Mammary epithelial cell (primary cell): ENCODE measurements at regions of chr12 and their contacts with region 1.

Region 1: GRCh38 chr12:131988054-131988796 is 38.5 kb downstream of the EP400 start:
- DNase-seq: no peak
- H3K4me3 ChIP-seq: no peak overlapping the region
- H3K27ac ChIP-seq: no peak overlapping the region
- H3K4me1 ChIP-seq: no peaks in the 10 kb centered on the region
- H3K27me3 ChIP-seq: no peaks in the 10 kb centered on the region
- CTCF ChIP-seq: no peak

Region 2: GRCh38 chr12:131710464-131711457 is 277.5 kb before region 1 on chr12 and contains the start of gene SFSWAP:
- CTCF ChIA-PET with region 1: no interaction called
- dilution Hi-C with region 1: no loop called
- in situ Hi-C with region 1: no loop called
- intact Hi-C with region 1: no loop called
- DNase-seq: peak; percentile 80
- H3K4me3 ChIP-seq: peak within 1 kb of the TSS; percentile 61 to 97 (median 81)
- H3K27ac ChIP-seq: peak within 1 kb of the TSS; percentile 98
- H3K4me1 ChIP-seq: peaks cover 15% of the 10 kb centered on the region
- H3K27me3 ChIP-seq: no peaks in the 10 kb centered on the region
- CTCF ChIP-seq: no peak
- total RNA-seq, gene SFSWAP: 19.8 to 41.6 TPM

Region 3: GRCh38 chr12:131872185-131873051 is 115.8 kb before region 1 on chr12:
- CTCF ChIA-PET with region 1: no interaction called
- dilution Hi-C with region 1: loop called (anchors 5 kb)
- in situ Hi-C with region 1: no loop called
- intact Hi-C with region 1: no loop called
- DNase-seq: peak; percentile 94
- H3K4me3 ChIP-seq: no peak overlapping the region
- H3K27ac ChIP-seq: no peak overlapping the region
- H3K4me1 ChIP-seq: peaks cover 19% of the 10 kb centered on the region
- H3K27me3 ChIP-seq: no peaks in the 10 kb centered on the region
- CTCF ChIP-seq: no peak

Region 4: DNA sequence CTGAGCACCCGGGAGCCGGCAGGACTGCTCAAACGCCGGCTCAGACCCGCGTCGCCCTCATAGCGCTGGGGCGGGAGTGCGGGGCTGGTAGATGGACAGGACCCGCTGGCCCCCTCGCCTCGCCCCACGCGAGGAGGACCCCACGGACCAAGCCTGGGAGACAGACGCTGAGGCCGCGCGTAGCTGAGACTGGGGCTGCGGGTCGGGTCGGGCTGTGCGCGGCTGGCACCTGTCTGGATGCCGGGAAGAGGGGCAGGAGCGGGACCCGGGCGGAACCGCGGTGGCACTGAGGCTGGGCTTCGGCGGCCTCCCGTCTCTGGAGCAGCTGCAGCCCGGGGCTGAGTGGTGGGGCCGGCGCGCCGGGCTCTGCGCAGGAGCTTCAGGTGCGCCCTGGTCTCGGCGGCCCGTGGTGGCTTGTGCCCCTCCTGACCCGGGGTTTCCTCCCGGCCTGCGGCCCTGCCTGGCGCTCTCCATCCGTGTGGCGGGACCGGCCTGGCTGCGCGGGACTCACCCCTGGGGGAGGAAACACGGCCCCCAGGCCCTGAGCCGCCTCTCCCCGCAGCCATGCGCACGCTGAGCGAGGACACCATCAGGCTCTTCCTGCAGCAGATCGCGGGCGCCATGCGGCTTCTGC is 80.0 kb before region 1 on chr12:
- CTCF ChIA-PET with region 1: no interaction called
- dilution Hi-C with region 1: loop called (anchors 5 kb)
- in situ Hi-C with region 1: no loop called
- intact Hi-C with region 1: no loop called
- DNase-seq: no peak
- H3K4me3 ChIP-seq: no peak overlapping the region
- H3K27ac ChIP-seq: no peak overlapping the region
- H3K4me1 ChIP-seq: peaks cover 17% of the 10 kb centered on the region
- H3K27me3 ChIP-seq: no peaks in the 10 kb centered on the region
- CTCF ChIP-seq: no peak

Region 5: DNA sequence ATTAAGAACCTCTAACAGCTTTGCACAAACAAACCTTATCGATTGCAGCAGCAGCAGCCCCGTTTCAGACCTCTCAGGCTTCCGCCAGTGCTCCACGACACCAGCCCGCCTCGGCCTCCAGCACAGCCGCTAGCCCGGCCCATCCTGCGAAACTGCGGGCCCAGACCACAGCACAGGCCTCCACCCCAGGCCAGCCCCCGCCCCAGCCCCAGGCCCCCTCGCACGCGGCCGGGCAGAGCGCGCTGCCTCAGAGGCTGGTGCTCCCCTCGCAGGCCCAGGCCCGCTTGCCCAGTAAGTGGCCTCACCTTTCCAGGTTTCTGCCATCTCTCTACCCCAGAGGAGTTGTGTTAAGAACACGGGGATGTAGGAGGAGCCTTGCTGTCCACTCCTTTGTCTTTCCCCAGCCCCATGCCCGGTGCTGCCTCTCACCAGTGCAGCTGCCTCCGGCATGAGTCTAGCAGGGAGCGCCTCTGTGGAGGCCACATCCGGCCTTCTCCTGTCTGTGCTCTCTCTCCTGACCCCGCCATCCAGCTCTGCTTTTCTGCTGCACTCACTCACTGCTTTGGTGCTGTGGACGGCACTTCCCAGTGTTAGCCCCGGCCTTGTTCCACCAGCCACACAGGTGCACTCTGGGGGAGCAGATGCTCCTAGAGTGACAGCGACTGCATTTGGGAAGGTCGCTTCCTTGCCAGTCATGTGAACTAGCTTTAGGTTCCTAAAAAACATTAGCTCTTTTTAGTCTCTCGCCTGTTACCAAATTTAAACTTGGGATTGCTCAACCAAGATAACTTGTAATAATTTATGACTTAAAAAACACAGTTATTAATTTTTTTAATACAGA is 33.0 kb after region 1 on chr12:
- CTCF ChIA-PET with region 1: no interaction called
- dilution Hi-C with region 1: loop called (anchors 5 kb)
- in situ Hi-C with region 1: no loop called
- intact Hi-C with region 1: no loop called
- DNase-seq: no peak
- H3K4me3 ChIP-seq: no peak overlapping the region
- H3K27ac ChIP-seq: no peak overlapping the region
- H3K4me1 ChIP-seq: no peaks in the 10 kb centered on the region
- H3K27me3 ChIP-seq: no peaks in the 10 kb centered on the region
- CTCF ChIP-seq: no peak